Ascending aorta (tissue), 2 donors: ENCODE measurements at regions of chr12 and their contacts with region 1.

Region 1: GRCh38 chr12:123049398-123050240 is 69.1 kb downstream of the ARL6IP4 start:
- DNase-seq: no peak
- H3K4me3 ChIP-seq: no peak overlapping the region
- H3K27ac ChIP-seq: peak overlapping the region; percentile 68 to 73
- H3K4me1 ChIP-seq: peaks cover 4 to 16% of the 10 kb centered on the region in 2 donors
- H3K27me3 ChIP-seq: no peaks in the 10 kb centered on the region
- CTCF ChIP-seq: no peak

Region 2: GRCh38 chr12:122669397-122670070 is 380.1 kb before region 1 on chr12:
- intact Hi-C with region 1: no loop called
- DNase-seq: no peak
- H3K4me3 ChIP-seq: no peak overlapping the region
- H3K27ac ChIP-seq: no peak overlapping the region
- H3K4me1 ChIP-seq: no peaks in the 10 kb centered on the region
- H3K27me3 ChIP-seq: no peaks in the 10 kb centered on the region
- CTCF ChIP-seq: no peak

Region 3: GRCh38 chr12:123089631-123090353 is 40.2 kb after region 1 on chr12:
- intact Hi-C with region 1: loop called (anchors 5 kb)
- DNase-seq: no peak
- H3K4me3 ChIP-seq: no peak overlapping the region
- H3K27ac ChIP-seq: peak overlapping the region in 1 of 2 donors; percentile 29
- H3K4me1 ChIP-seq: peaks cover 7 to 16% of the 10 kb centered on the region in 2 donors
- H3K27me3 ChIP-seq: no peaks in the 10 kb centered on the region
- CTCF ChIP-seq: no peak

Region 4: DNA sequence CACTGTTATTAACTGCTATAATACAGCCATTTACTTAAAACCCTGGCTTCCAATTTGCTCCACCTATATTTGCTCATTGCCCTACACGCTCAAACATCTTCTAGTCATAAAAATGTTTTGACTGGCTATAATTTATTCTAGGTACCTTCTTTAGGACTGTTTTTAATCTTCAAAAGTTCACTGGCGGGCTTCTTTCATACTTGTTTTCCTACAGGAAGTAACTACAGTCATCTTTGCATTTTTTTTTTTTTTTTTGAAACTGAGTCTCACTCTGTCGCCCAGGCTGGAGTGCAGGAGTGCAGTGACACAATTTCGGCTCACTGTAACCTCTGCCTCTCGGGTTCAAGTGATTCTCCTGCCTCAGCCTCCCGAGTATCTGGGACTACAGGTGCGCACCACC is 150.8 kb after region 1 on chr12:
- intact Hi-C with region 1: no loop called
- DNase-seq: no peak
- H3K4me3 ChIP-seq: no peak overlapping the region
- H3K27ac ChIP-seq: no peak overlapping the region
- H3K4me1 ChIP-seq: no peaks in the 10 kb centered on the region
- H3K27me3 ChIP-seq: no peaks in the 10 kb centered on the region
- CTCF ChIP-seq: no peak